CD4-positive, alpha-beta memory T cell (primary cell): ENCODE measurements at regions of chr7 and their contacts with region 1.

Region 1: DNA sequence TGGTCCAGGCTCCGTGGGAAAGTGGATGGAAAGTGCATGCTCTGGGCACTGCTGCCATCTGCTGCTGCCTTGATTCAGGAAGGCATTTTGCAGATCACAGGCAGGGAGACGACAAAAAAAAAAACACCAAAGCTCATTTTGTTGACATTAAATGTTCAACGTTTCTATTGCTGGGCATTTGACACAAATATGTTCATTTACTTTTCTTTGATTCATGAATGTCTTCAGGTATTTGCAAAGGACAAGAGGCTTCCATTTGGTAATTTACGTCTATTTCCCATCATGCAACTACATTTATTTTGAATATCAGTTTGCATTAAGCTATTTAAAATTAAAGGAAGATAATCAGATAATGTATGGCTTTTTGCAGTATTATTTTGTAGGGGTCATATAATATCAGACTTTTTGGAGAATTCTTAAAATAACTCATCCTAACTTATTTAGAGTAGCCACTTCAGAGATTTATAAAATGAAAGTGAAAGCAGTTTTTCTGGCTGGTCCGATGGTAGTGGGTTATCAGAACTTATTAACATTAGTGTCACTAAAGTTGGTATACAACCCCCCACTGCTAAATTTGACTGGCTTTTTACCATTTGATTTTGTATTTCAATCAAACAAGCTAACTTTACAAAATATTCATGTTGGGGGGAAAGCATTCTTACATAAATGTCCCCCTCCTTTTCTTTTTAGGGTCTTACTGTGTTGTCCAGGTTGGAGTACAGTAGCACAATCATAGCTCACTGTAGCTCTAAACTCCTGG is 65.3 kb downstream of the PDIA4 start:
- DNase-seq: peak; percentile 61 to 80 (median 76)
- H3K4me3 ChIP-seq: peak overlapping the region; percentile 43 to 57
- H3K4me3 Mint-ChIP-seq: peak overlapping the region; percentile 91 to 99 (median 95)
- H3K27ac ChIP-seq: peak overlapping the region; percentile 50
- H3K27ac Mint-ChIP-seq: peak overlapping the region; percentile 86 to 98 (median 93)
- H3K4me1 ChIP-seq: peaks cover 33% of the 10 kb centered on the region
- H3K4me1 Mint-ChIP-seq: peaks cover 11 to 38% (median 27%) of the 10 kb centered on the region in 4 donors
- H3K27me3 ChIP-seq: no peaks in the 10 kb centered on the region
- H3K27me3 Mint-ChIP-seq: no peaks in the 10 kb centered on the region

Region 2: DNA sequence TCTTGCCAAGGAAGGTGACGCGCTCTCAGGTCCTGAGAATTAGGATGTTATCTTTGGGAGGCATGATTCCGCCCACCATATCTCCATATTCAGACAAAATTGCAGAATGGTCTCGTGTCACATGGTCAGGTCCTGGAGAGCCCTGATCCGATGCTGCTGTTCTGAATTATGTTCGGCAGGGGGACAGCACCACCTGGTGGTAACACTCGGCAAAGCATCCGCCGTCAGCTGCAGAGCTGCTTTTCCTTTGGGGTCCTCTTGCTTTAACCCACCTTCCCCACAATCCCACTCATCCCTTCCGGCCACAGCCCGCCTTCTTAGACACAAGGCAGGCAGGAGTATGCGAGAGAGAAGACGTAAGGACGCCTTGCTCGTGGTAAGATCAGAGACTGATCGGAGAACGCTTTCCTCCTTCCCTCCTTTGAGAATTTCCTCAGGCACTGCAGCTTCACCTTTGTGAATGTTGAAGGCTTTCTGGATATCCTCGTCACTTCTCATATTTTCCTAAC is 700.2 kb before region 1 on chr7:
- CTCF ChIA-PET with region 1: no interaction called
- POLR2A ChIA-PET with region 1: no interaction called
- intact Hi-C with region 1: loop called (anchors 10 kb)
- DNase-seq: peak; percentile 31 to 48 (median 35)
- H3K4me3 ChIP-seq: no peak overlapping the region
- H3K4me3 Mint-ChIP-seq: peak overlapping the region in 6 of 8 donors; percentile 1 to 65 (median 40)
- H3K27ac ChIP-seq: no peak overlapping the region
- H3K27ac Mint-ChIP-seq: peak overlapping the region in 1 of 7 donors; percentile 52
- H3K4me1 ChIP-seq: peaks cover 4% of the 10 kb centered on the region
- H3K4me1 Mint-ChIP-seq: peaks cover 7 to 9% (median 8%) of the 10 kb centered on the region in 4 donors
- H3K27me3 ChIP-seq: no peaks in the 10 kb centered on the region
- H3K27me3 Mint-ChIP-seq: peaks cover 2 to 7% of the 10 kb centered on the region in 2 donors

Region 3: GRCh38 chr7:148575640-148576411 is 387.2 kb before region 1 on chr7:
- CTCF ChIA-PET with region 1: interaction called, 170 read pairs
- POLR2A ChIA-PET with region 1: interaction called, 7 read pairs
- intact Hi-C with region 1: loop called (anchors 1 kb)
- DNase-seq: peak; percentile 48 to 67 (median 57)
- H3K4me3 ChIP-seq: no peak overlapping the region
- H3K4me3 Mint-ChIP-seq: no peak overlapping the region
- H3K27ac ChIP-seq: no peak overlapping the region
- H3K27ac Mint-ChIP-seq: no peak overlapping the region
- H3K4me1 ChIP-seq: no peaks in the 10 kb centered on the region
- H3K4me1 Mint-ChIP-seq: peaks cover 0 to 2% (median 0%) of the 10 kb centered on the region in 4 donors
- H3K27me3 ChIP-seq: no peaks in the 10 kb centered on the region
- H3K27me3 Mint-ChIP-seq: peaks cover 0 to 4% of the 10 kb centered on the region in 2 donors

Region 4: GRCh38 chr7:148715027-148715426 is 248.0 kb before region 1 on chr7:
- CTCF ChIA-PET with region 1: no interaction called
- POLR2A ChIA-PET with region 1: no interaction called
- intact Hi-C with region 1: no loop called
- DNase-seq: no peak
- H3K4me3 ChIP-seq: no peak overlapping the region
- H3K4me3 Mint-ChIP-seq: peak overlapping the region in 2 of 8 donors; percentile 4 to 7
- H3K27ac ChIP-seq: no peak overlapping the region
- H3K27ac Mint-ChIP-seq: no peak overlapping the region
- H3K4me1 ChIP-seq: peaks cover 70% of the 10 kb centered on the region
- H3K4me1 Mint-ChIP-seq: peaks cover 54 to 91% (median 74%) of the 10 kb centered on the region in 4 donors
- H3K27me3 ChIP-seq: no peaks in the 10 kb centered on the region
- H3K27me3 Mint-ChIP-seq: no peaks in the 10 kb centered on the region

Region 5: DNA sequence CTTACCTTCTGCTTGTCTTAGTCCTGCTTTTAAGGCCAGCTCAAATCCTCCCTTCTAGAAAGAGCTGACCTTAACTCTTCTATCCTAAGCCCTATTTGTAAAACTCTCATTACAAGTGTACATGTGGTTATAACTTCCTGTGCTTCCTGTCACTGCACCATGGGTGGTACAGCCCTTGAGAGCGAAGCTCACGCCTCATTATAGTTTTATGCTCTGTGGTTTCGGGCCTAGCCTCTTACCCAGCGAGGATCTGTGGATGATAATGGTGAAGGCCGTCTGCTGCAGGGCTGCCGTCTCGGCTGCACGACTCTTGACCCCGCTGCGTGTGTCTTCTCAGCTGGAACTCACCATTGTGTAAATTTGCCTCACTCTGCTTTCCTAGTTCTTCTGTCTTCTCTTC is 189.7 kb before region 1 on chr7:
- CTCF ChIA-PET with region 1: interaction called, 17 read pairs
- POLR2A ChIA-PET with region 1: no interaction called
- intact Hi-C with region 1: loop called (anchors 5 kb)
- DNase-seq: peak; percentile 38 to 57 (median 43)
- H3K4me3 ChIP-seq: no peak overlapping the region
- H3K4me3 Mint-ChIP-seq: peak overlapping the region in 7 of 8 donors; percentile 15 to 77 (median 67)
- H3K27ac ChIP-seq: peak overlapping the region; percentile 52
- H3K27ac Mint-ChIP-seq: peak overlapping the region; percentile 55 to 88 (median 77)
- H3K4me1 ChIP-seq: peaks cover 24% of the 10 kb centered on the region
- H3K4me1 Mint-ChIP-seq: peaks cover 25 to 46% (median 33%) of the 10 kb centered on the region in 4 donors
- H3K27me3 ChIP-seq: no peaks in the 10 kb centered on the region
- H3K27me3 Mint-ChIP-seq: no peaks in the 10 kb centered on the region

Region 6: GRCh38 chr7:148819697-148820360 is 143.2 kb before region 1 on chr7:
- CTCF ChIA-PET with region 1: no interaction called
- POLR2A ChIA-PET with region 1: no interaction called
- intact Hi-C with region 1: no loop called
- DNase-seq: no peak
- H3K4me3 ChIP-seq: no peak overlapping the region
- H3K4me3 Mint-ChIP-seq: no peak overlapping the region
- H3K27ac ChIP-seq: no peak overlapping the region
- H3K27ac Mint-ChIP-seq: no peak overlapping the region
- H3K4me1 ChIP-seq: no peaks in the 10 kb centered on the region
- H3K4me1 Mint-ChIP-seq: peaks cover 0 to 3% (median 2%) of the 10 kb centered on the region in 4 donors
- H3K27me3 ChIP-seq: no peaks in the 10 kb centered on the region
- H3K27me3 Mint-ChIP-seq: no peaks in the 10 kb centered on the region

Region 7: DNA sequence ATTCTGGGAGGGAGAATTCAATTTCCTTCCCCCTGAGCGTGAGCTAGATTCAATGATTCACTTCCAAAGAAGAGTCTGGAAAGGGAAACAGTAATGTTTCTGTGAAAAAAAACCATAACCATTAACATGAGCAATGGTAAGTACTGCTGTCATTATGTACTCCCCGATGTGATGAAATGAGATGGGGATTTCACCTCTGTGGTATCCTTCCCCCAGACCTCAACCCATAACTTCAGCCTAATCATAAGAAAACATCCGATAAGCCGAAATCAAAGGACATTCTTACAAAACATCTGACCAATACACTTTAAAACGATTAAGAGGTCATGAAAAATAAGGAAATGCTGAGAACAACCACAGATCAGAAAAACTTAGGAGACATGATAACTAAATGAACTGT is 106.1 kb before region 1 on chr7:
- CTCF ChIA-PET with region 1: interaction called, 65 read pairs
- POLR2A ChIA-PET with region 1: interaction called, 9 read pairs
- intact Hi-C with region 1: loop called (anchors 1 kb)
- DNase-seq: no peak
- H3K4me3 ChIP-seq: no peak overlapping the region
- H3K4me3 Mint-ChIP-seq: no peak overlapping the region
- H3K27ac ChIP-seq: no peak overlapping the region
- H3K27ac Mint-ChIP-seq: no peak overlapping the region
- H3K4me1 ChIP-seq: peaks cover 20% of the 10 kb centered on the region
- H3K4me1 Mint-ChIP-seq: peaks cover 11 to 21% (median 16%) of the 10 kb centered on the region in 4 donors
- H3K27me3 ChIP-seq: no peaks in the 10 kb centered on the region
- H3K27me3 Mint-ChIP-seq: no peaks in the 10 kb centered on the region

Region 8: DNA sequence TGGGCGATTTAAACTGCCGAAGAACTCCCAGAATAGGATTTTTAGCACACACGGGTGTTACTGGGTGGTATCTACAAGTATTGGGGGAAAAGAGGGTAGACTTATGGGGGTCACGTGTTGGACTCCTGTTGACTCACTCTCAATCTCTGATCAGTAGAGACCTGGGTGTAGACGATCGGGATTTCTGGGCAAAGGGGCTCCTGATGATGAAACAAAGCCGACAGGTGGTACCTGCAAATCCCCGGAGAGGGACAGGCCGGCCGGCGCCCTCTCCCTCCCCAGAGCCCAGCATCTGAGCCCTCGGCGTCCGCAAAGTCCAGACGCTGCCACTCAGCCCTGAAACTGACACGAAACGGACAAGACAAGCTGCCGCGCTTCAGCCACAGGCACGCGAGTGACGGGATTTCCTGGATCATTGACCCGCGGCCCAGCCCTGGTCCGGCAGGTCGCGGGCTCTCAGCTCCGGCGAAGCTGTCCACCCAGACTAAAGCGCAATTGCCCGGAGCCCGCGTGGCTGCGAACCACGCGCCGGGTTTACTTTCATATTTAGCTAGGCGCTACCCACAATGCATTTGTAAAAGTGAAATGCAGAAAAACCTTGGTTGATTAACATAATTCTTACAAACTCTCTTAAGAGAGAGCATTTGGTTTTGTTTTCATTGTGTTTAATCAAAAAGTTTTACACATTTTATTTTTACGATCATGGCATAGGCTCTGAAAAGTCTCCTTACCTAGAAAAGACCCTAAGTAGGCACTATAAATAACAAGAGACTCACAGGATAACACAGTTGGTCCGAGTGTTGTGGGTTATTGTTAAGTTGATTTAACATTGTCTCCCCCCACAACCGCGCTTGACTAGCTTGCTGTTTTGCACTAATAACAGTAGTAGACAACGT is 22.1 kb before region 1 on chr7:
- CTCF ChIA-PET with region 1: interaction called, 22 read pairs
- POLR2A ChIA-PET with region 1: interaction called, 18 read pairs
- intact Hi-C with region 1: loop called (anchors 1 kb)
- DNase-seq: peak; percentile 75 to 84 (median 80)
- H3K4me3 ChIP-seq: peak overlapping the region; percentile 54 to 75
- H3K4me3 Mint-ChIP-seq: peak overlapping the region; percentile 93 to 97 (median 96)
- H3K27ac ChIP-seq: peak overlapping the region; percentile 90
- H3K27ac Mint-ChIP-seq: peak overlapping the region; percentile 91 to 99 (median 98)
- H3K4me1 ChIP-seq: peaks cover 21% of the 10 kb centered on the region
- H3K4me1 Mint-ChIP-seq: peaks cover 6 to 25% (median 13%) of the 10 kb centered on the region in 4 donors
- H3K27me3 ChIP-seq: no peaks in the 10 kb centered on the region
- H3K27me3 Mint-ChIP-seq: no peaks in the 10 kb centered on the region

Region 9: GRCh38 chr7:148987010-148987750 is 24.2 kb after region 1 on chr7:
- CTCF ChIA-PET with region 1: interaction called, 16 read pairs
- POLR2A ChIA-PET with region 1: interaction called, 11 read pairs
- intact Hi-C with region 1: loop called (anchors 1 kb)
- DNase-seq: peak; percentile 89 to 91 (median 90)
- H3K4me3 ChIP-seq: peak overlapping the region; percentile 95 to 98
- H3K4me3 Mint-ChIP-seq: peak overlapping the region; percentile 93 to 99 (median 98)
- H3K27ac ChIP-seq: peak overlapping the region; percentile 83
- H3K27ac Mint-ChIP-seq: peak overlapping the region; percentile 96 to 100 (median 98)
- H3K4me1 ChIP-seq: peaks cover 46% of the 10 kb centered on the region
- H3K4me1 Mint-ChIP-seq: peaks cover 27 to 59% (median 45%) of the 10 kb centered on the region in 4 donors
- H3K27me3 ChIP-seq: no peaks in the 10 kb centered on the region
- H3K27me3 Mint-ChIP-seq: peaks cover 2 to 5% of the 10 kb centered on the region in 2 donors

Region 10: DNA sequence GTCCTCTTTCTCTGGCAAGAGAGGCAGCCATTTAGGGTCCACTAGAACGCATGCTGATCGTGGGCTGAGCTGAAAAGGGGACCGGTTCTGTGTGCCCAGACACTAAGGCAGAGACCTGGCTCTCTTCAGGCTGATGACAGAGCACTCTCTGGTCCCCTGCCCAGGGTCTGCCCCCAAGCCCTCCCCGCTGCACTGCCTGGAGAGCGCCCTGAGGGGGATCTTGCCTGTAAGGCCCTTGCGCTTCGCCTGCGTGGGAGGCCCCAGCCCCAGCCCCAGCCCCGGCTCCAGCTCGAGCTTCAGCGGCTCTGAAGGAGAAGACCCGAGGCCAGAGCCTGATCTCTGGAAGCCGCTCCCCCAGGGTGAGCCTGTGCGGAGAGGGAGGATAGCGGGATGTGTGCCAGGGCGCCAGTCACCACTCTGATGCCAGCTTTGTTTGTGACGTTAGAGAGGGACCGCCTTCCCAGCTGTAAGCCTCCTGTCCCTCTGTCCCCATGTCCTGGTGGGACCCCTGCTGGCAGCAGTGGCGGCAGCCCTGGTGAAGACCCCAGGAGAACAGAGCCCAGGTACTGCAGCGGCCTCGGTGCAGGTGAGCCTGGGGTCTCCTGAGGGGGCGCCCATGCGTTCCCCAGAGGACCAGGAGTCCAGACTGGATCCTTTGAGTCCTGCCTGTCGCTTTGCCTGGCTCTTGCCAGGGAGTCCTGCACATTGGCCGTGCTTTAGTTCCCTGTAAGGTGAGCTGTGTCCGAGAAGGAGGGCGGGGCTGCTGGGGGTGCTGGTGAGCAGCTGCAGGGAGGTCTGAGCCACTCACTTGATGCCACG is 767.2 kb after region 1 on chr7:
- CTCF ChIA-PET with region 1: no interaction called
- POLR2A ChIA-PET with region 1: no interaction called
- intact Hi-C with region 1: no loop called
- DNase-seq: no peak
- H3K4me3 ChIP-seq: no peak overlapping the region
- H3K4me3 Mint-ChIP-seq: no peak overlapping the region
- H3K27ac ChIP-seq: no peak overlapping the region
- H3K27ac Mint-ChIP-seq: no peak overlapping the region
- H3K4me1 ChIP-seq: no peaks in the 10 kb centered on the region
- H3K4me1 Mint-ChIP-seq: no peaks in the 10 kb centered on the region
- H3K27me3 ChIP-seq: no peaks in the 10 kb centered on the region
- H3K27me3 Mint-ChIP-seq: no peaks in the 10 kb centered on the region